ENCODE measurements at regions of chr12 and their contacts with region 1.

Region 1: GRCh38 chr12:40622246-40622838 is 69.9 kb upstream of the CNTN1 start:
- H3K4me3 Mint-ChIP-seq: no peak overlapping the region
- H3K27ac Mint-ChIP-seq: no peak overlapping the region
- H3K4me1 Mint-ChIP-seq: no peaks in the 10 kb centered on the region
- H3K27me3 Mint-ChIP-seq: peaks cover 2% of the 10 kb centered on the region

Region 2: GRCh38 chr12:40691913-40692764 is 69.8 kb after region 1 on chr12 and contains the start of gene CNTN1:
- intact Hi-C with region 1: no loop called
- H3K4me3 Mint-ChIP-seq: peak within 1 kb of the TSS; percentile 52
- H3K27ac Mint-ChIP-seq: no peak within 1 kb of the TSS
- H3K4me1 Mint-ChIP-seq: peaks cover 14% of the 10 kb centered on the region
- H3K27me3 Mint-ChIP-seq: peaks cover 45% of the 10 kb centered on the region

Region 3: GRCh38 chr12:40921563-40922163 is 299.3 kb after region 1 on chr12:
- intact Hi-C with region 1: loop called (anchors 1 kb)
- H3K4me3 Mint-ChIP-seq: no peak overlapping the region
- H3K27ac Mint-ChIP-seq: no peak overlapping the region
- H3K4me1 Mint-ChIP-seq: peaks cover 7% of the 10 kb centered on the region
- H3K27me3 Mint-ChIP-seq: no peaks in the 10 kb centered on the region